A673 (cell line): ENCODE measurements at regions of chr3 and their contacts with region 1.

Region 1: DNA sequence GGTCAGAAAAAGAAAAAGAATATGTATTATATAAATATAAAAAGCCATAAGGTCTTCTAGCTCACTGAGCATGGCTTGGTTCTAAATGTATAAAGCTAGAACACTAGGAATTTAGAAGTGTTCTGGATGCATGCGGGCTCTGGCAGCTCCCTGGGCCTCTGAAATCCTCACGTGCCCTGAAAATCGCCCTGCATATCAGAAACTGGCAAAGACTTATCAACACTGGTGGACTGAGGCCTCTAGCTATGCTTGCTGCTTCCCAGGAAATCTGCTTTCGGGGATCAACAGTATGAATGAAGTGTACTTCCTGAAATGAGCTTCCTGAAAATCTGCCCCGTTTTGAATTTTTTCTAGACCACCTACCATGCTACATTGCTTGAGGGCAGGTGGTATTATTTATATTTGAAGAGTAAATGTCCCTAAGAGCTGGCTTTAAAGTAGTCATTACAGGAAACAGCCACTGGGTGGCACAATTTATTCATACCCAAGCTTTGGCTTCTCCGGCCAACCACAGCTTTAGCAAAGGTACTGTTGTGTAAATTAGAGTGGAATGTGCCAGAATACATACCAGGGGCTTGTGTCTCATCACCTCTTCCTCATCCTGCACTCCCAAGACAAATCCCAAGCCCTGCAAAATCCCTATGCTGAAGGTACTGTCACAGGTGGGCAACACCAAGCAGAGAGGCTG is 17.7 kb downstream of the CRTAP start:
- DNase-seq: peak; percentile 78
- H3K4me3 ChIP-seq: no peak overlapping the region
- H3K27ac ChIP-seq: no peak overlapping the region
- H3K4me1 ChIP-seq: no peaks in the 10 kb centered on the region
- H3K27me3 ChIP-seq: no peaks in the 10 kb centered on the region
- CTCF ChIP-seq: peak; percentile 81

Region 2: GRCh38 chr3:33318709-33319380 is 187.4 kb after region 1 on chr3:
- CTCF ChIA-PET with region 1: no interaction called
- POLR2A ChIA-PET with region 1: no interaction called
- intact Hi-C with region 1: loop called (anchors 2 kb)
- DNase-seq: peak; percentile 32
- H3K4me3 ChIP-seq: no peak overlapping the region
- H3K27ac ChIP-seq: no peak overlapping the region
- H3K4me1 ChIP-seq: peaks cover 6% of the 10 kb centered on the region
- H3K27me3 ChIP-seq: no peaks in the 10 kb centered on the region
- CTCF ChIP-seq: peak; percentile 47; the same call in 1 of the 2 replicates

Region 3: GRCh38 chr3:33372218-33373081 is 241.0 kb after region 1 on chr3:
- CTCF ChIA-PET with region 1: interaction called, 83 read pairs
- POLR2A ChIA-PET with region 1: no interaction called
- intact Hi-C with region 1: loop called (anchors 1 kb)
- DNase-seq: peak; percentile 76
- H3K4me3 ChIP-seq: no peak overlapping the region
- H3K27ac ChIP-seq: no peak overlapping the region
- H3K4me1 ChIP-seq: no peaks in the 10 kb centered on the region
- H3K27me3 ChIP-seq: no peaks in the 10 kb centered on the region
- CTCF ChIP-seq: peak; percentile 96

Region 4: GRCh38 chr3:33636125-33636850 is 504.8 kb after region 1 on chr3:
- CTCF ChIA-PET with region 1: no interaction called
- POLR2A ChIA-PET with region 1: no interaction called
- intact Hi-C with region 1: loop called (anchors 10 kb)
- DNase-seq: peak; percentile 78
- H3K4me3 ChIP-seq: no peak overlapping the region
- H3K27ac ChIP-seq: no peak overlapping the region
- H3K4me1 ChIP-seq: no peaks in the 10 kb centered on the region
- H3K27me3 ChIP-seq: no peaks in the 10 kb centered on the region
- CTCF ChIP-seq: peak; percentile 71

Region 5: GRCh38 chr3:33717866-33718594 is 586.6 kb after region 1 on chr3 and contains the start of gene CLASP2:
- CTCF ChIA-PET with region 1: interaction called, 4 read pairs
- POLR2A ChIA-PET with region 1: no interaction called
- intact Hi-C with region 1: loop called (anchors 10 kb)
- DNase-seq: peak; percentile 94
- H3K4me3 ChIP-seq: peak within 1 kb of the TSS; percentile 80
- H3K27ac ChIP-seq: peak within 1 kb of the TSS; percentile 95
- H3K4me1 ChIP-seq: peaks cover 17% of the 10 kb centered on the region
- H3K27me3 ChIP-seq: no peaks in the 10 kb centered on the region
- CTCF ChIP-seq: no peak
- total RNA-seq, gene CLASP2: 67.4 and 74.6 TPM in 2 replicates

Region 6: DNA sequence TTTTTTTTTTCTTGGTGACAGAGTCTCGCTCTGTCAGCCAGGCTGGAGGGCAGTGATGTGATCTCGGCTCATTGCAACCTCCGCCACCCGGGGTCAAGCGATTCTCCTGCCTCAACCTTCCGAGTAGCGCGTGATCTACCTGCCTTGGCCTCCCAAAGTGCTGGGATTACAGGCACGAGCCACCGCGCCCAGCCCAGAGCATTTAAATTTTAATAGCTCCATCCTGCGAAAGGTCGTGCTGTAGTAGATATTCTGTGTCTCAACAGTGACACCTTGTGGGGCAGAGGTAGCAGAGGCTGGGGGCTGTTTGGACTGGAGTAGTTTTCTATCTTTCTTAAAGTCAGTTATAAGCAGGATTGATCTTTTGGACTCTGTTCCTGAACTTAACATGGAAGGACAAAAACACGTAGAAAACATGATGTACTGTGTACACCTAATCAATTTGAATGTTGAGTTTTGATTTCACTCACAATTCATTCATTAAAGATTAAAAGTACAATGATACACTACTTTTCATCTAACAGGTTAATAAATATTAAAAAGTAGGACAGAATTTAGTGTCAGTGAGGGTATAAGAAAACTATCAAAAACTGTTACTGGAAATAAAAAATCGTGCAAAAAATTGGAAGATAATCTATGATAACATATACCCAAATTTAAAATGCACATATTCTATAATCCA is 656.0 kb after region 1 on chr3:
- CTCF ChIA-PET with region 1: interaction called, 20 read pairs
- POLR2A ChIA-PET with region 1: no interaction called
- intact Hi-C with region 1: loop called (anchors 2 kb)
- DNase-seq: peak; percentile 81
- H3K4me3 ChIP-seq: peak overlapping the region; percentile 24
- H3K27ac ChIP-seq: no peak overlapping the region
- H3K4me1 ChIP-seq: peaks cover 6% of the 10 kb centered on the region
- H3K27me3 ChIP-seq: no peaks in the 10 kb centered on the region
- CTCF ChIP-seq: peak; percentile 89